Endothelial cell of umbilical vein (primary cell): ENCODE measurements at regions of chr5 and their contacts with region 1.

Region 1: DNA sequence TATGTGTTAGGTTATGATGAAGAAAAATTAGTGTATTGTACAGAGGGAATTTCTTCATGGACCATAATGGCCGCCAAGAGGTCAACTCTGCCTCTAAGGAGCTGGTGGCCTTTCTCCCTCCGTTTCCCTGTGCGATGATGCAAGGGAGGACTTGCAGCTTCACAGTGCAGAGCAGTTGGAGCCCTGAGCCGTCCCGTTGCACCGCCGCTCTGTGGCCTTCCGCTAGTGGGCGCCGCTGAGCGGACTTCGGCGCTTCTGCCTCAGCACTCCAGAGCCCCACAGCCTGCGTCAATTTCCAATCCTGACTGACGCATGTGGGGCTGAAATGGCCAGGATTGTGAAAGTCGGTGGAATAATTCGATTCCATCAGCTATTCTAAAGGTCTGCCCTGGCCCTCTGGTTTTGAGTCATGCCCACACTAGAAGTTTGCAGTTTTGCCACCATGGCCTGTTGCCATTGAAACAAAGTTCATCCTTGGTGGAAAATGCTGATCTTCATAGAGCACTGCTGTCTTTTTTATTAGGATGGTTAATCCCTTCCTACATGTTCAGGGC is 22.7 kb upstream of the LECT2 start:
- DNase-seq: peak; percentile 85
- H3K4me3 ChIP-seq: no peak overlapping the region
- H3K27ac ChIP-seq: no peak overlapping the region
- H3K4me1 ChIP-seq: peaks cover 10% of the 10 kb centered on the region
- H3K27me3 ChIP-seq: peaks cover 13 to 22% of the 10 kb centered on the region in 2 experiments
- CTCF ChIP-seq: peak; percentile 98 to 99
- POLR2A ChIP-seq: no peak

Region 2: DNA sequence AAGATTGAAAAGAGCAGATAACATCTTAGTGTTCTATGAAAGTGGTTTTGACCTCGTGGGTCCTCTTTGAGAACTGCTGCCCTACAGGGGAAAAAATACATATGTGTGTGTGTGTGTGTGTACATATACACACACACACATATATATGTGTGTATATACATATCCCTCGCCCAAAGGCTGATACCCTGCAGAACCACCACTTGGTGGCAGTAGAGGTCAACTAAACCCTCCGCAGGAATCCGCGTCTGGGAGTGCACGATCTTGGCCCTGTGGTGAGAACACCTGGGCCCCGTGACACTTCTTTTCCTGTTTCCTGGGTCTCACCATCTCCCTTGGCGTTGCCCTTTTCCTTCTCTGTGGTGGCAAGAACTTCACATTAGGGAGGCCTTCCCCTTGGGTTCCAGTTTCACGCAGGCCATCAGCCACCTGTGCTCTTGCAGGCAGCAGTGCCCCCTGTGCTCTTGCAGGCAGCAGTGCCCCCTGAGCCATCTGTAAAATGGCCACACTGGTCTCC is 90.0 kb before region 1 on chr5:
- CTCF ChIA-PET with region 1: no interaction called
- POLR2A ChIA-PET with region 1: no interaction called
- dilution Hi-C with region 1: no loop called
- intact Hi-C with region 1: loop called (anchors 5 kb)
- DNase-seq: peak; percentile 61
- H3K4me3 ChIP-seq: no peak overlapping the region
- H3K27ac ChIP-seq: no peak overlapping the region
- H3K4me1 ChIP-seq: no peaks in the 10 kb centered on the region
- H3K27me3 ChIP-seq: peaks cover 0 to 3% of the 10 kb centered on the region in 2 experiments
- CTCF ChIP-seq: peak; percentile 71 to 76
- POLR2A ChIP-seq: no peak

Region 3: DNA sequence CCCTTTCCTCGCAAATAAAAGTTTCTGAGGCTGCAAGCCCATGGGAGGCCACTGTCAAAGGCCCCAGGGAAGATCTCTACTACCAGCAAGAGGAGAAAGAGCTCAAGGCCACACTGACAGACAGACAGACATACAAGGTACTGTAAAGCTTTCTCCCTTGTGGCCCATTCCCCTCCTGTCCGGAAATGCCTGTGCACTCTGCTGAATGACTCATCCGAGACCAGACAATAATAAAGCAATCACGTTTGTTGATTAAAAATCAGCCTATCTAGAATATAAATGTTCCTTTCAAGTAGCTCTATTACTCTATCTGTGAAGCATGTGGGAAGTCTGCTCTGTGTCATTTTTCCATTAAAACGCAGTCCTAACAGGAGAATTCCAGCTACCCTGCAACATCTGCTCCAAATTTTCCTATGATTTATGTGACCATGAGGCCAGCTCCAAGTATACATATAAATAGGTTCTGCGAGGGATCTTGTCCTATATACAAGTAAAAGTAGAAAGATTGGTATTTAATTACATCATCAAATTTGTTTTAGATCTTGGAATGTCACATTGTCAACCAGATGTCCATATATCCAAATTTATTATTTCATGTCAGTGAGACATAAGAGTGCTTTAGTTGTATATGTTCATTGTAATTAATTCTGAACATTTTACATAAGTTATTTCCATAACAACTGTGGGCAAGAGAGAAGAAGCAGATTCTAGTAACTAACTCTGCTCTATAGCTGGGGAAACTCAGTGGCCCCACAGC is 16.6 kb after region 1 on chr5:
- CTCF ChIA-PET with region 1: interaction called, 12 read pairs
- POLR2A ChIA-PET with region 1: no interaction called
- dilution Hi-C with region 1: no loop called
- intact Hi-C with region 1: no loop called
- DNase-seq: peak; percentile 79
- H3K4me3 ChIP-seq: no peak overlapping the region
- H3K27ac ChIP-seq: peak overlapping the region; percentile 72
- H3K4me1 ChIP-seq: peaks cover 35% of the 10 kb centered on the region
- H3K27me3 ChIP-seq: no peaks in the 10 kb centered on the region
- CTCF ChIP-seq: no peak
- POLR2A ChIP-seq: no peak

Region 4: DNA sequence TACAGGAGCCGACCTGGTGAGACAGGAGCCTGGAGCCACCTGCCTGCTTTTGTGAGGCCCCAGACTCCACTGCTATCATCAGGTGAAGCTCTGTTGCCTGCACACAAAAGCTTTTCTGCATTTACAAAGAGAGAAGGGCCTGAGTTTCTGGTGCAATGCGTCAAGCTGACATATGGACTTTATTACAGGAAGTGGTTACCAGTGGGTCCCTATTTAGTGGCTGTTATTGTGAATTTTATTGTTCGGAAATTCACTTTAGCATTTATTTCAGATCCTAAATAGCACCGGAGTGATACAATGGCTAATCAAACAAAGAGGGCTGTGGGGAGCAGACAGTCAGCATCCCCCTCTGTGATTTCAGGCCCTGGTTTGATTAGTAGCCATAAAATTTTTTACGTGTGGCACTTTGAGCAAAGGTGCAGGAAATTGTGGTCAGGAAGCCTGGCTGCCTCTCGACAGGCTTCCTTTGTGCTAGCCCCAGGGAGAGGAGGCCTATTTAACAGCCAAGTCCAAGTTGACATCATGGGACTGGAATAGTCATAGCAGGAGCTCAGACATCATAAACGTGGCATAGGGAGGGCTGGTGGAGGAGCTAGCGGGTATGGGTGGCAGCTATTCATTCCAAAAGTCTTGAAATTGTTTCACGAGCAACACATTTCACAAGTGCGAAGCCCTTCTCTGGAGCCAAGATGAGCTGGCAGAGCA is 59.7 kb after region 1 on chr5:
- CTCF ChIA-PET with region 1: interaction called, 15 read pairs
- POLR2A ChIA-PET with region 1: no interaction called
- dilution Hi-C with region 1: no loop called
- intact Hi-C with region 1: loop called (anchors 1 kb)
- DNase-seq: peak; percentile 58
- H3K4me3 ChIP-seq: no peak overlapping the region
- H3K27ac ChIP-seq: peak overlapping the region; percentile 84
- H3K4me1 ChIP-seq: peaks cover 32% of the 10 kb centered on the region
- H3K27me3 ChIP-seq: no peaks in the 10 kb centered on the region
- CTCF ChIP-seq: no peak
- POLR2A ChIP-seq: no peak

Region 5: DNA sequence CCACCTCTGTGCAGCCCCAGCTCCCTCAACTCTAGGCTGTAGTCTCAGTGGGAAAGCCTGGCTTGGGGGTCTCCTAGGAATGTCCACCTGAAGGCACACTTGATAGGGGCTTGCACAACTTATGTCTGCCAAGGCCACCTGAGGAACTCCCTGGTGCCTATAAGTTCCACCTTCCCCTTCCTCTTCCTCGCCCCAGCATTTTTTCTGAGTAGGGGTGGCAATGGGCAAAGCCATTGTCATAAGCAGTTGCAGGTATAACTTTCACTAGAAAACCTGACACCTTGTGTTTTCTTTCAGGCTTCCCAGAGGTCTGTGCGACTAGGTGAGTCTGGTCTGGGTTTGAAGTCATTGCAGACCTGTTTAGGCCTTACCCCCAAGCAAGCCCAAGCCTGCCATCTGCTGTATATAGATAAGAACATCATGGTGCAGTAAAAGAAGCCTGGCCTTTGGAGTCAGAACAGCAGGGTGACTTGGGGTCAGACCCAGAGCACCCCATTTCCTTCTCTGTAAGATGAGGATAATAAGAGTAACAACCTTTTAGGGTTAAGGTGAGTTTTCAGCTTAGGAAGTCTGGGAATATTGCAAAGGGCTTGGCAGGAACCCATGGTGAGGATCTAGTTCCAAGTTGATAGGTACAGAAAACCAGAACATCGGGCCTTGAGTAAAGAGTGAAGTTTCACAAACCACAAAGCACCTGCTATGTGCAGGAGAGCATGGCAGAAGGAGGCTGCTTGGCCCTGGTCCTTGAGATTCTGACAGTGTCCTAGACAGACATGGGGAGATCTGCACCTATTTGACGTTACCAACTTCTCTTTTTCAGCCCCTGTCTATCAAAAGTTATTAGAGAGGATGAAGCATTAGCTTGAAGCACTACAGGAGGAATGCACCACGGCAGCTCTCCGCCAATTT is 85.2 kb after region 1 on chr5:
- CTCF ChIA-PET with region 1: interaction called, 53 read pairs
- POLR2A ChIA-PET with region 1: no interaction called
- dilution Hi-C with region 1: no loop called
- intact Hi-C with region 1: loop called (anchors 1 kb)
- DNase-seq: peak; percentile 40
- H3K4me3 ChIP-seq: no peak overlapping the region
- H3K27ac ChIP-seq: no peak overlapping the region
- H3K4me1 ChIP-seq: peaks cover 15% of the 10 kb centered on the region
- H3K27me3 ChIP-seq: no peaks in the 10 kb centered on the region
- CTCF ChIP-seq: peak; percentile 42 to 54
- POLR2A ChIP-seq: no peak

Region 6: DNA sequence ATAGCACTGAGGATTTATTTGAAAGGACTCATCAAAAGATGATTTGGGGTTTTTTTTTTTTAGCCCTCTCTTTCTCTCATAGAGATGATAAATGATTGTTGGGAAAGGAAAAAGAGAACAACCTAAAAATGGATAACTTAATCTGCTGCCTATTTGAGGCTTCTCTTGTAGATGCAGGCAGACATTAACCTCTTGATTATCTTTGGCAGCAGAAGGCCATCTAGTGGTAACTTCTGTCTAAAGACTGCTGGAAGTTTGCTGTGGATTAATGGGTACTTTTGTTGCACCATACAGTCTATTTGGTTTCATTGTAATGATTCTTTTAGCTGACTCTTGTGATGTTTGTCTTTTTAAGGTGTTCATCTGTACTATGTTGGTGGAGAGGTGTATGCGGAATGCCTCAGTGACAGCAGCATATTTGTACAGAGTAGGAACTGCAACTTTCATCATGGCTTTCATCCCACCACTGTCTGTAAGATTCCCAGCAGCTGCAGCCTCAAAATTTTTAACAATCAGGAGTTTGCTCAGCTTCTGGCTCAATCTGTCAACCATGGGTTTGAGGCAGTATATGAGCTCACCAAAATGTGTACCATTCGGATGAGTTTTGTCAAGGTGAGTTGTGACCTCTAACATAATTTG is 196.7 kb after region 1 on chr5:
- CTCF ChIA-PET with region 1: no interaction called
- POLR2A ChIA-PET with region 1: no interaction called
- dilution Hi-C with region 1: no loop called
- intact Hi-C with region 1: loop called (anchors 1 kb)
- DNase-seq: peak; percentile 57
- H3K4me3 ChIP-seq: no peak overlapping the region
- H3K27ac ChIP-seq: no peak overlapping the region
- H3K4me1 ChIP-seq: no peaks in the 10 kb centered on the region
- H3K27me3 ChIP-seq: no peaks in the 10 kb centered on the region
- CTCF ChIP-seq: peak; percentile 38 to 54
- POLR2A ChIP-seq: no peak